Mammary epithelial cell (primary cell): ENCODE measurements at regions of chr3 and their contacts with region 1.

Region 1: GRCh38 chr3:186609247-186609868 is 3.5 kb upstream of the AHSG start:
- DNase-seq: peak; percentile 72
- H3K4me3 ChIP-seq: no peak overlapping the region
- H3K27ac ChIP-seq: no peak overlapping the region
- H3K4me1 ChIP-seq: peaks cover 9% of the 10 kb centered on the region
- H3K27me3 ChIP-seq: no peaks in the 10 kb centered on the region
- CTCF ChIP-seq: peak; percentile 68 to 84

Region 2: GRCh38 chr3:185585859-185586685 is 1023.3 kb before region 1 on chr3 and contains the start of gene SENP2:
- CTCF ChIA-PET with region 1: interaction called, 11 read pairs
- dilution Hi-C with region 1: no loop called
- in situ Hi-C with region 1: no loop called
- intact Hi-C with region 1: no loop called
- DNase-seq: peak; percentile 99
- H3K4me3 ChIP-seq: peak within 1 kb of the TSS; percentile 60 to 93 (median 82)
- H3K27ac ChIP-seq: peak within 1 kb of the TSS; percentile 83
- H3K4me1 ChIP-seq: peaks cover 11% of the 10 kb centered on the region
- H3K27me3 ChIP-seq: no peaks in the 10 kb centered on the region
- CTCF ChIP-seq: no peak
- total RNA-seq, gene SENP2: 27.5 to 41.7 TPM

Region 3: DNA sequence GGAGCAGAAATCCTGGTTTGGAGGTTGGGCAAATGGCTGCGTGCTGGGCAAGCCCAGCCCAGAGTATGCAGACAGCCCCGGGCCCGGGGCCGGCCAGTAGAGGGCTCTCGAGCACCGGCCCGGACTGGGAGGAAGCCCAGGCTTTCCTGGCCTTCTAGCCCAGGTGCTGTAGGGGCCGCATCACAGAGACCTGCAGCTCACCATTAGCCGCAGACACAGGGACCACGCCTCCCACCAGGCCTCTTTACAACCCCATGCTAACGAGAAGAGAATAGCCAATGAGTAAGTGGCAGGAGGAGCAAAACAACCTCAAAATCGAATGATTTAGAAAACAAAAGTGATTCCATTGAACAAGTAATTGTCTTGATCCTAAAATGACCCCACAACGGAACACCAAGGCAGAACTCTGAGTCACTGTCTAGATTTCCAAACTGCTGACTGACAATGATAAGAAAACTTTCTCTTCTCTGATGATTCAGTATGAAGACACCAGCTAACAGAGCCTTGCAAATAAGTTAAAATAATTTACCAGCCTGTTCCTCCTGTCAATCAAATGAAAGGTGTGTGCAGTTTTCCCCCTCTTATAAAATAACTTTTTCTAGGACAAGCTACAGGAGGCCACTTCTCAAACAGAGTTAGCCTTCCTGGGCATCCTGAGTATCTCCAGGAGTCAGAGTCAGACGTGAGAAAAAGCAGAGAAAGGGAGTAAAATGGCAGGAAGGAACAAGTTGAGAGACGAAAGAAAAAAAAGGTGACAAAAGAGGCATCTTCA is 349.6 kb before region 1 on chr3:
- CTCF ChIA-PET with region 1: no interaction called
- dilution Hi-C with region 1: no loop called
- in situ Hi-C with region 1: no loop called
- intact Hi-C with region 1: loop called (anchors 1 kb)
- DNase-seq: peak; percentile 84
- H3K4me3 ChIP-seq: peak overlapping the region in 2 of 3 experiments; percentile 2 to 27
- H3K27ac ChIP-seq: no peak overlapping the region
- H3K4me1 ChIP-seq: peaks cover 25% of the 10 kb centered on the region
- H3K27me3 ChIP-seq: no peaks in the 10 kb centered on the region
- CTCF ChIP-seq: peak; percentile 67 to 96

Region 4: DNA sequence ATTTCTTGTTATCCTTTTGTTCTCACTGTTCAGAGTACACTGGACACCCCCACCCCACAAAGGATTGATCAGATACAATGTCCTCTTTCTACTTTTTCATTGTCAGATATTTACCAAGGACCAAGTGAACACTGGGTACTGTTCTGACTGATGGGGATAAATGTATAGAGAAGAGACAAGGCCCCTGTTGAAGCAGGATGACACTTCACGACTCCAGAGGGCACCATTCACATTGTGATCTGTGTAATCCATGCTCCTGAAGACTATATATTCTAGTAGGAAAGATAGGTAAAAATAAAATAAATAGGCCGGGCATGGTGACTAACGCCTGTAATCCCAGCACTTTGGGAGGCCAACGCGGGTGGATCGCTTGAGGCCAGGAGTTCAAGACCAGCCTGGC is 58.0 kb before region 1 on chr3:
- CTCF ChIA-PET with region 1: no interaction called
- dilution Hi-C with region 1: no loop called
- in situ Hi-C with region 1: no loop called
- intact Hi-C with region 1: loop called (anchors 1 kb)
- DNase-seq: no peak
- H3K4me3 ChIP-seq: no peak overlapping the region
- H3K27ac ChIP-seq: no peak overlapping the region
- H3K4me1 ChIP-seq: no peaks in the 10 kb centered on the region
- H3K27me3 ChIP-seq: no peaks in the 10 kb centered on the region
- CTCF ChIP-seq: no peak

Region 5: GRCh38 chr3:186589121-186589520 is 20.2 kb before region 1 on chr3:
- CTCF ChIA-PET with region 1: interaction called, 5 read pairs
- dilution Hi-C with region 1: no loop called
- in situ Hi-C with region 1: no loop called
- intact Hi-C with region 1: loop called (anchors 1 kb)
- DNase-seq: peak; percentile 36
- H3K4me3 ChIP-seq: no peak overlapping the region
- H3K27ac ChIP-seq: peak overlapping the region; percentile 81
- H3K4me1 ChIP-seq: peaks cover 32% of the 10 kb centered on the region
- H3K27me3 ChIP-seq: no peaks in the 10 kb centered on the region
- CTCF ChIP-seq: peak; percentile 33 to 49

Region 6: GRCh38 chr3:186679151-186679550 is 69.8 kb after region 1 on chr3:
- CTCF ChIA-PET with region 1: no interaction called
- dilution Hi-C with region 1: no loop called
- in situ Hi-C with region 1: no loop called
- intact Hi-C with region 1: no loop called
- DNase-seq: no peak
- H3K4me3 ChIP-seq: no peak overlapping the region
- H3K27ac ChIP-seq: no peak overlapping the region
- H3K4me1 ChIP-seq: peaks cover 12% of the 10 kb centered on the region
- H3K27me3 ChIP-seq: no peaks in the 10 kb centered on the region
- CTCF ChIP-seq: no peak